ENCODE measurements at regions of chr10 and their contacts with region 1.

Region 1: DNA sequence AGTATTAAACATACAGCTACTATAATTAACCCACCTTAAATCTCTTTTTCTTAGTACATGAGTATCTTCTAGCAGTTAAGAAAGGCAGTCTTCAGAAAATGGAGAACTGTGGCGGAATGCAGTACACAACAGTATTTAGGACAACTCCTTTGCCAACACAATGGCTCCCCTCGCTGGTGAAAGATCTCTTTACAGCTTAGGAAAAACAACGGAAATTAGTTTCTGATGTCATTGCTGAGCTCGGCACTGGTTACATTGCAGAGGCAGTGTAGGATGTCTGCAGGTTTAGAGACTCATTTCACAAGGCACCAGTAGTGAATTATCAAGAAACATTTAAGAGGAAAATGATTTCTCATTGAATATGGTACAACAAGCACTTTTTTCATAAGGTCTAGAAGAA is 43.4 kb downstream of the GLRX3 start:
- DNase-seq: peak in 7 of 9 donors; percentile 39 to 70 (median 63)
- ATAC-seq: peak; percentile 82
- H3K4me3 ChIP-seq: no peak overlapping the region
- H3K4me3 Mint-ChIP-seq: no peak overlapping the region
- H3K27ac ChIP-seq: no peak overlapping the region
- H3K27ac Mint-ChIP-seq: peak overlapping the region in 3 of 9 donors; percentile 20 to 71 (median 66)
- H3K4me1 ChIP-seq: no peaks in the 10 kb centered on the region
- H3K4me1 Mint-ChIP-seq: peaks cover 0 to 20% (median 14%) of the 10 kb centered on the region in 7 donors
- H3K27me3 ChIP-seq: no peaks in the 10 kb centered on the region
- H3K27me3 Mint-ChIP-seq: no peaks in the 10 kb centered on the region

Region 2: GRCh38 chr10:129605986-129606518 is 573.6 kb before region 1 on chr10:
- CTCF ChIA-PET with region 1: no interaction called
- POLR2A ChIA-PET with region 1: no interaction called
- intact Hi-C with region 1: loop called in 1 of 2 experiments (anchors 10 kb)
- DNase-seq: no peak
- ATAC-seq: no peak
- H3K4me3 ChIP-seq: no peak overlapping the region
- H3K4me3 Mint-ChIP-seq: no peak overlapping the region
- H3K27ac ChIP-seq: no peak overlapping the region
- H3K27ac Mint-ChIP-seq: no peak overlapping the region
- H3K4me1 ChIP-seq: no peaks in the 10 kb centered on the region
- H3K4me1 Mint-ChIP-seq: peaks cover 0 to 8% (median 2%) of the 10 kb centered on the region in 7 donors
- H3K27me3 ChIP-seq: no peaks in the 10 kb centered on the region
- H3K27me3 Mint-ChIP-seq: no peaks in the 10 kb centered on the region

Region 3: DNA sequence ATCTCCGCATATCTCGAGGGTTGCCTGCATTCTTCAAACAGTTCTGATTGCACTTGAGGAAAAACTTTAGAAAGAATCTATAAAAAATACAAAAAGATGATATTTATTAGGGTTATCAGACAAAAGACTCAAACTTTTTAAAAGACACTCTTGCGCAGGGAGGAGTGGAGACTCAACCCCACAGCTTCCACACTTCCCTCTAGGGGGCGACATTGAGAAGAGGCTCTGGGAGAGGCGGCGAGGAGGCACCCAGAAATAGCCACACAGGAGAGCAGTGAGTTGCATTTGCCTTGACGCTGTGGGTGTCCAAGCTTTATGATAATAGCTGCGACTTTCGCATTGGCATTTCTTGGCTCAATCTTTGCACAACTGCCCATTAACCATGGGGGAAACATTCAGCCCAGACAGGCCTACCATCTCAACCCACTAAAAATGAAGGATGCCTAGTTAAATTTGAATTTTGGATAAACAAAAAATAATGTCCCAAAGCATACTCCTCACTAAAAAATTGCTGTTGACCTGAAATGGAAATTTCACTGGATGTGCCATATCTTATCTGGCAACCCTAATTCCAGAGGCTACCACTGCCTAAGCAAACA is 301.8 kb before region 1 on chr10:
- CTCF ChIA-PET with region 1: interaction called, 3 read pairs
- POLR2A ChIA-PET with region 1: no interaction called
- intact Hi-C with region 1: loop called in 1 of 2 experiments (anchors 2 kb)
- DNase-seq: peak in 7 of 9 donors; percentile 8 to 39 (median 29)
- ATAC-seq: peak; percentile 63
- H3K4me3 ChIP-seq: no peak overlapping the region
- H3K4me3 Mint-ChIP-seq: no peak overlapping the region
- H3K27ac ChIP-seq: no peak overlapping the region
- H3K27ac Mint-ChIP-seq: no peak overlapping the region
- H3K4me1 ChIP-seq: no peaks in the 10 kb centered on the region
- H3K4me1 Mint-ChIP-seq: no peaks in the 10 kb centered on the region
- H3K27me3 ChIP-seq: no peaks in the 10 kb centered on the region
- H3K27me3 Mint-ChIP-seq: peaks cover 0 to 8% (median 3%) of the 10 kb centered on the region in 5 donors

Region 4: DNA sequence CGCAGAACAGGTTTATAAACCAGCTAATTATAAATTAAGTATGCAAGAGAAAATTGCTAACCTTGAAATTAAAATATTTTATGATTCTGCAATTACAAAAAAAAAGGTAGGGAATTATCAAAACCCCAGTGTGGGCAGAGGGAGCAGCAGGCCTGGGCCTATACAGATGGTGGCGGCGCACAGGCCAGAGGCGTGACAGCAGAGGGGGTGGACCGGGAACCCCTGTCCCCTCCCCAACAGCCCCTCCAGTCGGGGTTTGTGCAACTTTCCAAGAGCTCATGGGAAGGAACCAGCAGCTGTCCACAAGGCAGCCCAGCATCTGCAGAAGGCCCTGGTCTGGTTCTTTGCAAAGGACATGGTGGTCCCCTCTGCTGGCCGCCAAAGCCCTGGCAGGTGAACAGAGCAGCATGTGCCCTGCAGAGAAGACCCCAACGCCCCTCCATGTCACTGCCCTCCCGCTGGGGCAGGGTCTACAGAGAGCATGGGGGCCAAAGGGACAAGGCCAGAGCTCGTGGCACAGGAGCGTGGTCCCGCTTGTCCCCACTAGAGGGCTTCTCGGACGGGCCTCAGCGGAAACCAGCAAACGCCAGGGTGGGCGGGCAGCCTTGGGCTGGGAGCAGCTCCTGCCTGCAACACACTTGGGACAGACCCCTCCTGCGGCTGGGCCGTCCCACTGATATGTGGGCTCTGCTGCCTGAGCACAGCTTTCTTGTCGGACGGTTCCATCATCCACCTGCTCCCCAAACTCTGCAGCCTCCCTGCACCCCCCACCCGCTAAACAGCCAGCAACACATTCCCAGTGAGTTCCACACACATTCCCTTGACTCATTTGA is 290.6 kb before region 1 on chr10:
- CTCF ChIA-PET with region 1: interaction called, 5 read pairs
- POLR2A ChIA-PET with region 1: no interaction called
- intact Hi-C with region 1: loop called in 1 of 2 experiments (anchors 1 kb)
- DNase-seq: peak in 8 of 9 donors; percentile 4 to 34 (median 16)
- ATAC-seq: peak; percentile 50
- H3K4me3 ChIP-seq: no peak overlapping the region
- H3K4me3 Mint-ChIP-seq: no peak overlapping the region
- H3K27ac ChIP-seq: no peak overlapping the region
- H3K27ac Mint-ChIP-seq: no peak overlapping the region
- H3K4me1 ChIP-seq: no peaks in the 10 kb centered on the region
- H3K4me1 Mint-ChIP-seq: no peaks in the 10 kb centered on the region
- H3K27me3 ChIP-seq: no peaks in the 10 kb centered on the region
- H3K27me3 Mint-ChIP-seq: peaks cover 0 to 3% (median 0%) of the 10 kb centered on the region in 5 donors

Region 5: DNA sequence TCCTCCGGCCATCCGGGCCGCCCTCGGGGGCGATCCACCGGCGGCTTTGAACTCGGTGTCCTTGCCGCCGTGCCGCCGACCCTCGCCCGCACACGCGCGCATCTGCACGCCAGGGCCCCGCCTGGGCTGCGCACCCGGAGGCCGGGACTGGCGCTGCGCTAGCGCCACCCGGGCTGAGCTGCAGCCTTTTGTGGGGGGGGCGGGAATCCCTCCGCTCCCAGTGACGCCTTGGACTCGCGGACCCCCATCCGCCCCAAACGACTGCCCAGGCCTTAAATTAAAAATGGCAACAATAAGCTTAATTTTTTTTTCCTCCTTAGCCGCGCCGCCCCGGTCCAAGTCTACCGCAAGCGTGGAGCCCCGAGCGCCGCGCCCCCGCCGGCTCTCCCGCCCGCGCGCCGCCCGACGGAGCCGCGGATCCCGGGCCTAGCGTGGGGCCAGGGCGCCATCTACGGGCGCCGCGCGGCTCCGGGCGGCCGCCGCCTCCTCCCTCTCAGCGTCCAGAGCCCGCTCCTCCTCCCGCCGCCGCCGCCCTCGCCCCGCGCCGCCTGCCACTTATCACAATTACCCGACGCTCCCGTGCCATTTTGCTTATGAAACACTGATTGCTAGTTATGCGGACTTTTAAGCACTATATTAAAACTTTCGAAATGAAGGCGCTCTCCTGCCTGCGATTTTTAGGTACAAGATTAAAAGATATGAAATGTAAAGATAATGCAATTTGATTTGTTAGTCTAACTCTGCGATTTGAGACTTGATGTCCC is 208.1 kb before region 1 on chr10:
- CTCF ChIA-PET with region 1: no interaction called
- POLR2A ChIA-PET with region 1: no interaction called
- intact Hi-C with region 1: loop called in 1 of 2 experiments (anchors 1 kb)
- DNase-seq: no peak
- ATAC-seq: peak; percentile 71
- H3K4me3 ChIP-seq: no peak overlapping the region
- H3K4me3 Mint-ChIP-seq: peak overlapping the region; percentile 29 to 86 (median 68)
- H3K27ac ChIP-seq: no peak overlapping the region
- H3K27ac Mint-ChIP-seq: peak overlapping the region in 3 of 9 donors; percentile 46 to 85 (median 69)
- H3K4me1 ChIP-seq: no peaks in the 10 kb centered on the region
- H3K4me1 Mint-ChIP-seq: peaks cover 8 to 25% (median 21%) of the 10 kb centered on the region in 7 donors
- H3K27me3 ChIP-seq: peaks cover 0 to 38% of the 10 kb centered on the region in 2 donors
- H3K27me3 Mint-ChIP-seq: peaks cover 51 to 70% (median 61%) of the 10 kb centered on the region in 5 donors

Region 6: GRCh38 chr10:130136226-130137089 is 43.2 kb before region 1 on chr10 and contains the start of gene GLRX3:
- CTCF ChIA-PET with region 1: interaction called, 3 read pairs
- POLR2A ChIA-PET with region 1: no interaction called
- intact Hi-C with region 1: loop called (anchors 2 to 5 kb)
- DNase-seq: peak; percentile 79 to 95 (median 87)
- ATAC-seq: peak; percentile 99
- H3K4me3 ChIP-seq: peak within 1 kb of the TSS; percentile 63
- H3K4me3 Mint-ChIP-seq: peak within 1 kb of the TSS; percentile 81 to 95 (median 90)
- H3K27ac ChIP-seq: peak within 1 kb of the TSS; percentile 86
- H3K27ac Mint-ChIP-seq: peak within 1 kb of the TSS in 7 of 9 donors; percentile 48 to 93 (median 85)
- H3K4me1 ChIP-seq: peaks cover 23 to 32% of the 10 kb centered on the region in 2 donors
- H3K4me1 Mint-ChIP-seq: peaks cover 28 to 50% (median 46%) of the 10 kb centered on the region in 7 donors
- H3K27me3 ChIP-seq: no peaks in the 10 kb centered on the region
- H3K27me3 Mint-ChIP-seq: peaks cover 0 to 13% (median 6%) of the 10 kb centered on the region in 5 donors
- total RNA-seq, gene GLRX3: 30.1 to 72.9 (median 37.0) TPM

Region 7: GRCh38 chr10:130190055-130190736 is 10.6 kb after region 1 on chr10:
- CTCF ChIA-PET with region 1: interaction called, 3 read pairs
- POLR2A ChIA-PET with region 1: no interaction called
- intact Hi-C with region 1: loop called in 1 of 2 experiments (anchors 1 kb)
- DNase-seq: peak; percentile 75 to 97 (median 88)
- ATAC-seq: peak; percentile 99
- H3K4me3 ChIP-seq: peak overlapping the region; percentile 51
- H3K4me3 Mint-ChIP-seq: peak overlapping the region in 6 of 10 donors; percentile 12 to 65 (median 44)
- H3K27ac ChIP-seq: no peak overlapping the region
- H3K27ac Mint-ChIP-seq: no peak overlapping the region
- H3K4me1 ChIP-seq: no peaks in the 10 kb centered on the region
- H3K4me1 Mint-ChIP-seq: peaks cover 0 to 9% (median 7%) of the 10 kb centered on the region in 7 donors
- H3K27me3 ChIP-seq: no peaks in the 10 kb centered on the region
- H3K27me3 Mint-ChIP-seq: peaks cover 6 to 21% (median 9%) of the 10 kb centered on the region in 5 donors

Measured in naive thymus-derived CD4-positive, alpha-beta T cell (primary cell).